A549 (cell line): ENCODE measurements at regions of chr9 and their contacts with region 1.

Region 1: GRCh38 chr9:78369639-78370219 is 72.8 kb downstream of the PSAT1 start:
- DNase-seq: peak; percentile 52 to 66
- ATAC-seq: peak; percentile 74 to 92; a peak in 4 of 6 replicates
- H3K4me3 ChIP-seq: no peak overlapping the region
- H3K27ac ChIP-seq: no peak overlapping the region
- H3K4me1 ChIP-seq: no peaks in the 10 kb centered on the region
- CTCF ChIP-seq: peak; percentile 63
- EP300 ChIP-seq: no peak
- POLR2A ChIP-seq: no peak
- RAD21 ChIP-seq: peak; percentile 37 to 55; a peak in 3 of 5 replicates

Region 2: DNA sequence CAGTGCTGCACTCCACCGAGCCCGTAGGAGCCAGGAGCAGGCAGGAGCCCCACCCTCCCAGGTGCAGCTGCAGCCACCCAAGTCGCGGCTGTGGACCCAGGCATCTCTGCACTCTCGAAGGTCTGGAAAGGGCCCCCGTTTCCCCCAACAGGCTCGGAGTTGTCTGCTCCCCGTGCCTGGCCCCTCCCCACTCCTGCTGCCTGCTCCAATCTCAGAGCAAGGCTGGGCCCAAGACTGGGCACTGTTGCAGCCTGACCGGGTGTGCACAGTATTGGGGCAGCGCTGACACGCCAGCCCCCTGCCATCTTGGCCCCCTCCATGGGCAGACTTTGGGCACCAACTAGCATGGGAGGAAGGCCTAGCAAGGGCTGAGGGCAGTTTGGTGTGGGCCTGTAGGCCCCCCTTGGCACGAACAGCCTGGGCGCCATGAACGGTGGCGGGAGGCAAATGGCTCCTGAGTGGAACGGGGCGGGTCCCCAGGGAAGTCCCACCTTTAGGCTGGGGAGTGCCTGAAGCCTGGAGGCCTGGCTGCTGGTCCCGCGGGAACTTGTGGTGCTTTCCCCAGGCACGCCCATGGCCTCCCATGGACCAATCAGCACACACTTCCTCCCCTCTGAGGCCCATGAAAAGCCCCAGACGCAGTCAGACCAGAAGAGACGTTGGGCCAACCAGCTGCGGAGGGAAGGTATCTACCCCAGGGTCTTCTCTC is 12.4 kb before region 1 on chr9:
- CTCF ChIA-PET with region 1: interaction called, 29 read pairs
- POLR2A ChIA-PET with region 1: no interaction called
- DNase-seq: no peak
- ATAC-seq: no peak
- H3K4me3 ChIP-seq: no peak overlapping the region
- H3K27ac ChIP-seq: no peak overlapping the region
- H3K4me1 ChIP-seq: no peaks in the 10 kb centered on the region
- CTCF ChIP-seq: no peak
- EP300 ChIP-seq: no peak
- POLR2A ChIP-seq: no peak
- RAD21 ChIP-seq: no peak

Region 3: DNA sequence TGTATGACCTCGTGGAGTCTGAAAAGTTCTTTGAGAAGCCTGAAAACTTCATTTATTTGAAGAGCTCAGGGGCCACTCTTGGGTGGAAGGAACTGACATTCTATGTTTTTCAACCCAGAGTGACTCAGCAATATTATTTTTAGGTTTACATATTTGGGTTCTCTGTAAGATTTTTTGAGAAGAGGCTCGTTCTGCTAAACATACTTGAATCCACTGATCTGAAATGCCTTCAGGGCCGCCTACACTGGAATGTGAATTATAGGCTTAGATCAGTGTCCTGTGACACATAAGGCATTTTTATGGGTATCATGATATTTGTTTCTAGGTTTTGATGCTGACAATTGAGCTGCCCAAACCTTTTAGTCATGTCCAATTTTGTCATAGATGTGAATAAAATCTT is 13.4 kb after region 1 on chr9:
- CTCF ChIA-PET with region 1: interaction called, 14 read pairs
- POLR2A ChIA-PET with region 1: no interaction called
- DNase-seq: peak in 1 of 2 experiments; percentile 7
- ATAC-seq: no peak
- H3K4me3 ChIP-seq: no peak overlapping the region
- H3K27ac ChIP-seq: peak overlapping the region; percentile 49 to 68
- H3K4me1 ChIP-seq: peaks cover 10% of the 10 kb centered on the region
- CTCF ChIP-seq: no peak
- EP300 ChIP-seq: no peak
- POLR2A ChIP-seq: no peak
- RAD21 ChIP-seq: no peak

Region 4: GRCh38 chr9:78424299-78424698 is 54.6 kb after region 1 on chr9:
- CTCF ChIA-PET with region 1: no interaction called
- POLR2A ChIA-PET with region 1: no interaction called
- DNase-seq: no peak
- ATAC-seq: no peak
- H3K4me3 ChIP-seq: no peak overlapping the region
- H3K27ac ChIP-seq: no peak overlapping the region
- H3K4me1 ChIP-seq: no peaks in the 10 kb centered on the region
- CTCF ChIP-seq: no peak
- EP300 ChIP-seq: no peak
- POLR2A ChIP-seq: no peak
- RAD21 ChIP-seq: no peak

Region 5: GRCh38 chr9:78769690-78770089 is 400.0 kb after region 1 on chr9:
- CTCF ChIA-PET with region 1: no interaction called
- POLR2A ChIA-PET with region 1: no interaction called
- DNase-seq: peak in 1 of 2 experiments; percentile 2
- ATAC-seq: peak; percentile 25 to 34; a peak in 2 of 6 replicates
- H3K4me3 ChIP-seq: no peak overlapping the region
- H3K27ac ChIP-seq: 0 out of 6 replicates have a peak overlapping the region, but pooled peaks of 1 of the 2 experiments have one; percentile 12
- H3K4me1 ChIP-seq: no peaks in the 10 kb centered on the region; the same call in 2 of the 3 replicates
- CTCF ChIP-seq: no peak
- EP300 ChIP-seq: no peak
- POLR2A ChIP-seq: no peak
- RAD21 ChIP-seq: no peak